ENCODE measurements at regions of chr11 and their contacts with region 1.

Region 1: GRCh38 chr11:45025716-45026492 is 75.2 kb upstream of the TP53I11 start:
- DNase-seq: no peak
- H3K4me3 ChIP-seq: no peak overlapping the region
- H3K27ac ChIP-seq: peak overlapping the region in 2 of 4 donors; percentile 32 to 39
- H3K4me1 ChIP-seq: peaks cover 32 to 46% (median 39%) of the 10 kb centered on the region in 4 donors
- H3K27me3 ChIP-seq: no peaks in the 10 kb centered on the region
- CTCF ChIP-seq: no peak
- EP300 ChIP-seq: no peak
- POLR2A ChIP-seq: no peak

Region 2: GRCh38 chr11:45097721-45098493 is 72.0 kb after region 1 on chr11:
- intact Hi-C with region 1: loop called (anchors 5 kb)
- DNase-seq: peak; percentile 85
- H3K4me3 ChIP-seq: no peak overlapping the region
- H3K27ac ChIP-seq: no peak overlapping the region
- H3K4me1 ChIP-seq: peaks cover 7 to 30% (median 25%) of the 10 kb centered on the region in 4 donors
- H3K27me3 ChIP-seq: peaks cover 0 to 9% (median 0%) of the 10 kb centered on the region in 4 donors
- CTCF ChIP-seq: peak in 2 of 3 experiments; percentile 25 to 35
- EP300 ChIP-seq: peak; percentile 56
- POLR2A ChIP-seq: no peak

Region 3: DNA sequence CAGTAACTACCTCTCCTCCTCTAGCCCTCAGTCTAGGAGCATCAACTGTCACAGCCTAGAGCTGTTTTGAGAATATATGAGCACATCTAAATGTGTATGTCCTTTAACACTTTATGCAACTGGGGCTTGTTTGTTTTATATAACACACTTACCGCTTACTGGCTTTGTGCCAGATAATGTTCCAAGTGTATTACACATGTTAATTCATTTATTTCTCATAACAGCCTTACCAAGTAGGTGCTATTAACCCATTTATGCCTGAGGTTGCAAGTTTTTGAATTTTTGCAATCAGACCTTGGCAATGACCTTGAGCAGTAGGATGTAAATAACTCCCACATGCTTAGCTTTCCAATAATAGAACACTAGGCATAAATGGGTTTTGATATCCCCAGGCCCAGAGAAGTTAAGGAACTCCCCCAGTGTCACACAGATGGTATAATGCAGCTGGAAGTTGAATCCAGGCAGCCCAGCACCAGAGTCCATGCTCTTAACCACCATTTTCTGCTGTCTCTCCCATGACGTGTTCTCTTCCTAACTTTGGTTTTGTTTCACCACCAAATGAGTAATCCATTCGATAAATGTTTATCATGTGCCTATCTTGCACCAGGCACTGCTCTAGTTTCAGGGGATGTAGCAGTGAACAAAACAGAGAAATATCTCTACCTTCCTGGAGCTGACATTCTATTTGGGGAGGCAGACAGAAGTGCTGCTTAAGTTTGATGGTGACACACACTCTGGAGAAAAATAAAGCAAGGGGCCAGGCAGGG is 143.6 kb after region 1 on chr11:
- intact Hi-C with region 1: no loop called
- DNase-seq: no peak
- H3K4me3 ChIP-seq: no peak overlapping the region
- H3K27ac ChIP-seq: no peak overlapping the region
- H3K4me1 ChIP-seq: peaks cover 19 to 40% (median 30%) of the 10 kb centered on the region in 4 donors
- H3K27me3 ChIP-seq: no peaks in the 10 kb centered on the region
- CTCF ChIP-seq: no peak
- EP300 ChIP-seq: no peak
- POLR2A ChIP-seq: no peak

Measured in esophagus muscularis mucosa (tissue), 4 donors.